ENCODE measurements at regions of chr1 and their contacts with region 1.

Region 1: GRCh38 chr1:154213274-154213673 is 7.1 kb upstream of the CFAP141 start:
- DNase-seq: no peak
- H3K4me3 ChIP-seq: no peak overlapping the region
- H3K27ac ChIP-seq: no peak overlapping the region
- H3K4me1 ChIP-seq: peaks cover under 1% of the 10 kb centered on the region
- H3K27me3 ChIP-seq: no peaks in the 10 kb centered on the region
- CTCF ChIP-seq: no peak
- POLR2A ChIP-seq: no peak

Region 2: GRCh38 chr1:154198756-154199562 is 14.3 kb before region 1 on chr1:
- CTCF ChIA-PET with region 1: interaction called, 19 read pairs
- POLR2A ChIA-PET with region 1: interaction called, 5 read pairs
- dilution Hi-C with region 1: no loop called
- intact Hi-C with region 1: no loop called
- DNase-seq: peak; percentile 78
- H3K4me3 ChIP-seq: no peak overlapping the region
- H3K27ac ChIP-seq: no peak overlapping the region
- H3K4me1 ChIP-seq: no peaks in the 10 kb centered on the region
- H3K27me3 ChIP-seq: peaks cover 3 to 4% of the 10 kb centered on the region in 2 experiments
- CTCF ChIP-seq: peak; percentile 31 to 56
- POLR2A ChIP-seq: no peak